Dendritic cell treated with granulocyte-macrophage colony-stimulating factor and Interleukin-4, amounts not matched to agents 40 ng/mL and 50 ng/mL, for 4 days (primary cell): ENCODE measurements at regions of chr1 and their contacts with region 1.

Region 1: DNA sequence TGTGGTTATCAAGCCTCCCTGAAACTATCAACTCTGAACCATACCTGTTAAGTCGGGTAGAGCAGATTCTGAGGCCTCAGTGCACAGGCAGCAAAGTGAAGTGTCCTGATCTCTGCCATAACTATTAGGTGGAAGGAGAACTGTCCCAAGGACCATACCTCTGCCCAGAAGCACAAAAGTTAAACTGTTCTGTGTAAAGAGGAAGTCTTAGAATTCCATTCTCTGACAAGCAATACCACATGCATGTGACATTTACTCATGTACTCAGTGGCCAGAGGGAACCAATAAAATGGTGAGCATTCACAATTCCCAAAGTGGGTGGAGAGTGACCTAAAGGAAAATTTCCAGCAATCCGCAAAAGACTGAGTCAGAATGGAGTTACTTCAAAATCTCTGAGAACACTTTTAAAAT is 61.0 kb downstream of the TOR3A start:
- H3K4me3 Mint-ChIP-seq: peak overlapping the region; percentile 72
- H3K27ac Mint-ChIP-seq: peak overlapping the region; percentile 91
- H3K4me1 Mint-ChIP-seq: peaks cover 46% of the 10 kb centered on the region
- H3K27me3 Mint-ChIP-seq: no peaks in the 10 kb centered on the region

Region 2: GRCh38 chr1:179081687-179082332 is 61.1 kb before region 1 on chr1 and contains the start of gene TOR3A:
- intact Hi-C with region 1: no loop called
- H3K4me3 Mint-ChIP-seq: peak within 1 kb of the TSS; percentile 92
- H3K27ac Mint-ChIP-seq: peak within 1 kb of the TSS; percentile 89
- H3K4me1 Mint-ChIP-seq: peaks cover 41% of the 10 kb centered on the region
- H3K27me3 Mint-ChIP-seq: no peaks in the 10 kb centered on the region

Region 3: DNA sequence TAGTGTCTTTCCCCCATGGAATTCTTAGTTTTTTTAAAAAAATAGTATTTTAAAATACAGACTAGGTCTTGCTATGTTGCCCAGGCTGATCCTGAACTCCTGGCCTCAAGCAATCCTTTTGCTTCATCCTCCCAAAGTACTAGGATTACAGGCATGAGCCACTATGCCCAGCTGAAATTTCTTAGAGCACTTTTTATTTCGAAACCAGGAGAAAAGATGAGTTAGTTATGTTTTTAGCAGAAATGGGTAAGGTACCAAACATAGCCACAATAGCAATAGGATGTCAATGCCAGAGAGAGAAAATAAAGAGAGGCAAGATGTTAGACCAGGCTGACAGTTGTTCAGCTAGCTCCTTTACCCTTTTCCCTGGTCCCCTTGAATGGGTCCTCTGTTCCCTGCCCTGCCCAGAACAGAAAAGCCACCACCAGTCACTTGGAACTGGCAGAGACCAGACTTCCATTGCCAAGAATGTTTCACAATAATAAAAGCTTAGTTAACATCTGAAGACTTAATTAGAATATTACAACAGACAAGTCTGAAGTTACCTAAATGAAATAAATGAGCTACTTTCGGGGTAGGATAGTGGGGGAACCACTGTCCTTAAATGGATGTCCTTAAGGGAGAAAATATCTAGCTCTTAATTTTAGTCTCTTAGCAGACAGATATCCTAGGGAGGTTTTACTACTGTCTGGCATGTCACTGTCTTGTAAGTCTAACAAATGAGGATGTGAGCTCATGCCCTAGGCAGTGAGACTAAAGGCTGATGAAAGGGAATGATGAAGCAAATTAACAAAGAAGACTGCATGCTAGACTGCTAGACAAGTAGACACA is 32.3 kb after region 1 on chr1:
- intact Hi-C with region 1: loop called (anchors 5 kb)
- H3K4me3 Mint-ChIP-seq: no peak overlapping the region
- H3K27ac Mint-ChIP-seq: peak overlapping the region; percentile 70
- H3K4me1 Mint-ChIP-seq: peaks cover 23% of the 10 kb centered on the region
- H3K27me3 Mint-ChIP-seq: no peaks in the 10 kb centered on the region

Region 4: GRCh38 chr1:179229214-179230140 is 86.6 kb after region 1 on chr1 and contains the start of gene ABL2:
- intact Hi-C with region 1: loop called (anchors 5 kb)
- H3K4me3 Mint-ChIP-seq: peak within 1 kb of the TSS; percentile 99
- H3K27ac Mint-ChIP-seq: peak within 1 kb of the TSS; percentile 86
- H3K4me1 Mint-ChIP-seq: peaks cover 53% of the 10 kb centered on the region
- H3K27me3 Mint-ChIP-seq: no peaks in the 10 kb centered on the region